ENCODE measurements at regions of chr2 and their contacts with region 1.

Region 1: GRCh38 chr2:37389989-37390765 is 45.7 kb downstream of the QPCT start:
- DNase-seq: peak; percentile 87
- H3K4me3 Mint-ChIP-seq: no peak overlapping the region
- H3K27ac Mint-ChIP-seq: peak overlapping the region; percentile 71
- H3K4me1 Mint-ChIP-seq: peaks cover 13% of the 10 kb centered on the region
- H3K27me3 Mint-ChIP-seq: no peaks in the 10 kb centered on the region

Region 2: DNA sequence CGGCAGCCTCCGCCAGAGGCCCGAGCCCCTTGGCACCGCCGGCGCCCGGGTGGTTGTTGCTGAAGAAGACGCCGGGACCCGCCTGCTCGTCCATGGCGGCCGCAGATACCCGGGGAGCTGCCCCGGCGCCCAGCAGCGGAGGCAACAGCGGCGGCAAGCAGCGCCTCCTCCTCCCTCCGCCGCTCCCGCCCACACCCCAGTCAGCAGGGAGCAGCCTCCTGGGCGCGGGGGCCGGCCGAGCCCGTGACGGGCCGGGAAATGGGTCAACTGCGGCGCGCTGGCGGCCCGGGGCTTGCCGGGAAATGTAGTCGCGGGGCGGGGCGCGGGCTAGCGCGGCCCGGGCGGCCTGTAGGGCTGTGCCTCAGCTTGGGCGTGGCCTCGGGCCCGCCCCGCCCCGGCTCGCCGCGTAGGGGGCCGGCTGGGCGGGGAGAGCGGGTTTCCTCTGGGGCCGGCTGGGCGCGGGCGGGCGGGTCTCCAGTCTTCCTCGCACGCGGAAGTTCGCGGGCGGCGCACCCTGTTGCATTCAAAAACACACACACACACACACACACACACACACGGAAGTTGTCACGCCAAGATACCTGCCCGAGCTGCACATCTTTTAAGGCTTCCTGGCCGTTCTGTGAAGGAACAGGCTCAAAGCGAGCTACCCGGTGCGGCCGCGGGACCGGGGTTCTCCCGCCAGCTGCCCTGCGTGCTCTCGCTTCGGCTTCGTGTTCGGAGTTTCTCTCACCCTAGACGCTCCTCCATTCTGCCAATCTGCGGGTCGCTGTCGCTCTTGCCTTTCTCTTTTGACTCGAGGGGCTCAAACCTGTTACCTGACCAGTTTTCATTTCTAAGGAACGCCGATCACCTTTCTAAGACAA is 423.6 kb before region 1 on chr2 and contains the start of gene STRN:
- CTCF ChIA-PET with region 1: no interaction called
- intact Hi-C with region 1: loop called (anchors 1 kb)
- DNase-seq: peak; percentile 96
- H3K4me3 Mint-ChIP-seq: peak within 1 kb of the TSS; percentile 94
- H3K27ac Mint-ChIP-seq: peak within 1 kb of the TSS; percentile 90
- H3K4me1 Mint-ChIP-seq: peaks cover 33% of the 10 kb centered on the region
- H3K27me3 Mint-ChIP-seq: no peaks in the 10 kb centered on the region
- total RNA-seq, gene STRN: 19.3 to 22.2 TPM

Region 3: GRCh38 chr2:37224063-37224462 is 166.1 kb before region 1 on chr2:
- CTCF ChIA-PET with region 1: no interaction called
- intact Hi-C with region 1: no loop called
- DNase-seq: no peak
- H3K4me3 Mint-ChIP-seq: no peak overlapping the region
- H3K27ac Mint-ChIP-seq: no peak overlapping the region
- H3K4me1 Mint-ChIP-seq: peaks cover 56% of the 10 kb centered on the region
- H3K27me3 Mint-ChIP-seq: no peaks in the 10 kb centered on the region

Region 4: DNA sequence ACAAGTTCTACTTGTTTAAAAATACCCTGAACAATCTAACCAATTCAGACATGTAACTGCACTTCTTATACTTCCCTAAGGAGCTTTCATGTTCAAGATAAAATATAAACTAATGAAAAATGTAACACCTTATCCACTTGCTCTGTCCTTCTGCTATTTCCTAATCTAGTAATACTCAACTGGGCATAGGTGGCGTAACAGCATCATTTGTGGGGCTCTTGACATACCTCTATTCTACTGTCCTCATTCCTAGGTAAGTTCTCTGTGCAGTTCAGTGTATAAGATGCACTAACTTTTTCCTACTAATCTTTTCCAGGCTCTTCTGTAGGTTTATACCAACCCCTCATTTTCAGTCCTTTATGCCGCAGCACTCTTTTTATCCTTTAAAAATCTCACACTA is 102.2 kb before region 1 on chr2:
- CTCF ChIA-PET with region 1: no interaction called
- intact Hi-C with region 1: loop called (anchors 2 kb)
- DNase-seq: peak; percentile 59
- H3K4me3 Mint-ChIP-seq: no peak overlapping the region
- H3K27ac Mint-ChIP-seq: no peak overlapping the region
- H3K4me1 Mint-ChIP-seq: no peaks in the 10 kb centered on the region
- H3K27me3 Mint-ChIP-seq: no peaks in the 10 kb centered on the region

Region 5: DNA sequence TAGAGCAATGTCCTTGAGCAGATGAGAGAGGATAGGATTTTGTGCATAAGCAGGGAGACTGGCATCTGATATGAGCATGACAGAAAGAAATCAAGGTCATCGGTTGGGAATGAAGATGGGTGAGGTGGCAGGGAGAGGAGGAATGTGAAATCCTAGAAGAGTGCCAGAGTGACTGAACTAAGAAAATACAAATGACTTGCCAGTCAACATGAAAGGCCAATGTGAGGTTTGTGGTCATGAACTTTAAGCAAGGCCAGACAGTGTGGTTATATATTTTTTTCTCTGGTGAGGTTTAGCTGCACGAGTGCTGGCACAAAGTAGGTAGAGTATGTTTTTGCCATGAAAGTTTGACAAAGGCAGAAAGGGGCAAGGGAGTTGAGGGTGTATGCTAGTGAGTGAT is 24.5 kb before region 1 on chr2:
- CTCF ChIA-PET with region 1: interaction called, 7 read pairs
- intact Hi-C with region 1: loop called (anchors 1 kb)
- DNase-seq: peak; percentile 27
- H3K4me3 Mint-ChIP-seq: no peak overlapping the region
- H3K27ac Mint-ChIP-seq: no peak overlapping the region
- H3K4me1 Mint-ChIP-seq: peaks cover 3% of the 10 kb centered on the region
- H3K27me3 Mint-ChIP-seq: peaks cover 26% of the 10 kb centered on the region

Region 6: DNA sequence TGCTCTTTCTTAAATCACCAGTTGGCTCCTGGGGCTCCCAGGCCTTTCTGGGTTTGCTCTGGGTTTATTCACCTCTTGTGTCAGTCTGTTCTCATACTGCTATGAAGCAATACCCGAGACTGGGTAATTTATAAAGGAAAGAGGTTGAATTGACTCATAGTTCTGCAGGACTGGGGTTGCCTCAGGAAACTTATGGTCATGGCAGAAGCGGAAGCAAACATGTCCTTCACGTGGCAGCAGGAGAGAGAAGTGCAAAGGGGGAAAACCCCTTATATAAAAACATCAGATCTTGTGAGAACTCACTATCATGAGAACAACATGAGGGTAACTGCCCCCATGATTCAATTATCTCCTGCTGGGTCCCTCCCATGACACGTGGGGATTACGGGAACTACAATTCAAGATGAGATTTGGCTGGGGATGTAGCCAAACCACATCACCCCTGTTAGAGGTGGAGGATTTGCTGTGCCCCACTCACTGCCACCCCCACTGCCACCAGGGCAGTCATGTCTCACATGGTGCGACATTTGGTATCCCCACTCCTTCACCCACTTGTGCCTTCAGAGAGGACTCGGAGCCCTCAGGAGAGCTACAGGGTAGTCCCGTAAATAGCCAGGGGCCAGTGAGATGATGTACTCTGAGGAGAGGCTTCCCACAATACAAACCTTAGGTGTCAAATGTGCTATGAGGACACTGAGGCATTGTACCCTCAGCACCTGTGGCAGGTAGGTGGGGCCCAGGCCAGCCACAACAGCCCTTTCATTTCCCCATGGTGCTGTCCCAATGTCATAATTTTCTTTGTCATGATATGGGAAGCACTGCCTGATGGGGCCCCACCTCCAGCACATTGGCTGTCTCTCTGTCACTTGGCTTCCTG is 245.6 kb after region 1 on chr2:
- CTCF ChIA-PET with region 1: no interaction called
- intact Hi-C with region 1: loop called (anchors 1 kb)
- DNase-seq: peak; percentile 85
- H3K4me3 Mint-ChIP-seq: no peak overlapping the region
- H3K27ac Mint-ChIP-seq: peak overlapping the region; percentile 90
- H3K4me1 Mint-ChIP-seq: peaks cover 49% of the 10 kb centered on the region
- H3K27me3 Mint-ChIP-seq: no peaks in the 10 kb centered on the region

Region 7: DNA sequence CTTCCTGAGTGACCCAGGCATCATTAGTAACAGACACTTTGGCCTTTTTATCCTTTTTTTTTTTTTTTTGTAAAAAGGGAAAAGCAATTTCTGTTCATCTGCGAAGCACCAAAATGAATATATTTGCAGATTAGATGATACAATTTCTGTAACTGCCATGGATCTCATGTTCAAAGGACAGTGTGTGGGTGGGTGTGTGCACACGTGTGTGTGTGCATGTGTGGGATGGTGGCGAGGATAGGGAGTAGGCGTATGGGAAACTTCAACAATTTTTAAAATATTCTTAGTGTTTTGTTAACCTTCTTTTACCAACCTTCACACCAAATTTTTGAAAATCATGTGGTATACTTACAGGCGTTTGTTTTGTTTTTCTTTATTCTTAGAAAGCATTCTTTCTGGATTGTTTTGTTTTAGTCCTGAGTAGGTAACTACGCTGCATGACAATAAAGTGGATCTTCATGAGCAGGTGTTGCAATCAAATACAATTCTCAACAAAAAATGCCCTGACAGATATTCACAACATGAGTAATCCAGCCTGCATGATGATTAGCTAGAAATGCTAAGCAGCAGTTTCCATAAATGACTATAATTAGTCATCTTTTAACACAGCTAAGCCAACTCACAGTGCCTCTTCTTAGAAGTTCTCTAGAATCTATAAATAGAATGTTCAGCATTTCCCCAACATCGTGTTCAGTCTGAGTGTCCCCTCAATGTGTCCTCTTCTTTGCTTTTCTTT is 481.4 kb after region 1 on chr2:
- CTCF ChIA-PET with region 1: interaction called, 98 read pairs
- intact Hi-C with region 1: loop called (anchors 1 kb)
- DNase-seq: no peak
- H3K4me3 Mint-ChIP-seq: peak overlapping the region; percentile 25
- H3K27ac Mint-ChIP-seq: peak overlapping the region; percentile 86
- H3K4me1 Mint-ChIP-seq: peaks cover 30% of the 10 kb centered on the region
- H3K27me3 Mint-ChIP-seq: peaks cover 12% of the 10 kb centered on the region

Measured in activated naive CD4-positive, alpha-beta T cell treated with anti-CD3 and anti-CD28 coated beads for 36 hours (primary cell).